ENCODE measurements at regions of chr1 and their contacts with region 1.

Region 1: GRCh38 chr1:154335025-154335714 is 9.8 kb downstream of the ATP8B2 start:
- DNase-seq: peak; percentile 81 to 95
- H3K4me3 ChIP-seq: no peak overlapping the region
- CTCF ChIP-seq: peak in 1 of 3 donors; percentile 68
- POLR2A ChIP-seq: no peak

Region 2: GRCh38 chr1:154097873-154098272 is 237.3 kb before region 1 on chr1:
- intact Hi-C with region 1: no loop called
- DNase-seq: peak in 1 of 2 donors; percentile 43
- H3K4me3 ChIP-seq: no peak overlapping the region
- CTCF ChIP-seq: no peak
- POLR2A ChIP-seq: no peak

Region 3: GRCh38 chr1:154183045-154183915 is 151.9 kb before region 1 on chr1:
- intact Hi-C with region 1: loop called (anchors 10 kb)
- DNase-seq: peak; percentile 94 to 99
- H3K4me3 ChIP-seq: peak overlapping the region; percentile 94
- CTCF ChIP-seq: no peak
- POLR2A ChIP-seq: peak in 1 of 2 donors; percentile 93

Measured in lower leg skin (tissue), 4 donors.